ENCODE measurements at regions of chr3 and their contacts with region 1.

Region 1: GRCh38 chr3:101724329-101725193 is at the start of gene CEP97:
- DNase-seq: peak; percentile 94
- H3K4me3 Mint-ChIP-seq: peak within 1 kb of the TSS; percentile 97
- H3K27ac Mint-ChIP-seq: peak within 1 kb of the TSS; percentile 97
- H3K4me1 Mint-ChIP-seq: peaks cover 33% of the 10 kb centered on the region
- H3K27me3 Mint-ChIP-seq: no peaks in the 10 kb centered on the region
- total RNA-seq, gene CEP97: 17.0 to 20.3 TPM

Region 2: GRCh38 chr3:100708967-100709841 is 1015.4 kb before region 1 on chr3 and contains the start of gene TFG:
- CTCF ChIA-PET with region 1: no interaction called
- intact Hi-C with region 1: loop called (anchors 1 kb)
- DNase-seq: peak; percentile 98
- H3K4me3 Mint-ChIP-seq: peak within 1 kb of the TSS; percentile 83
- H3K27ac Mint-ChIP-seq: peak within 1 kb of the TSS; percentile 97
- H3K4me1 Mint-ChIP-seq: peaks cover 39% of the 10 kb centered on the region
- H3K27me3 Mint-ChIP-seq: peaks cover 6% of the 10 kb centered on the region
- total RNA-seq, gene TFG: 45.6 to 46.0 TPM

Region 3: GRCh38 chr3:100913870-100914648 is 810.5 kb before region 1 on chr3:
- CTCF ChIA-PET with region 1: no interaction called
- intact Hi-C with region 1: no loop called
- DNase-seq: no peak
- H3K4me3 Mint-ChIP-seq: no peak overlapping the region
- H3K27ac Mint-ChIP-seq: no peak overlapping the region
- H3K4me1 Mint-ChIP-seq: no peaks in the 10 kb centered on the region
- H3K27me3 Mint-ChIP-seq: peaks cover 11% of the 10 kb centered on the region

Region 4: GRCh38 chr3:101643861-101644613 is 80.5 kb before region 1 on chr3:
- CTCF ChIA-PET with region 1: no interaction called
- intact Hi-C with region 1: loop called (anchors 1 kb)
- DNase-seq: peak; percentile 69
- H3K4me3 Mint-ChIP-seq: no peak overlapping the region
- H3K27ac Mint-ChIP-seq: peak overlapping the region; percentile 83
- H3K4me1 Mint-ChIP-seq: peaks cover 24% of the 10 kb centered on the region
- H3K27me3 Mint-ChIP-seq: no peaks in the 10 kb centered on the region

Region 5: DNA sequence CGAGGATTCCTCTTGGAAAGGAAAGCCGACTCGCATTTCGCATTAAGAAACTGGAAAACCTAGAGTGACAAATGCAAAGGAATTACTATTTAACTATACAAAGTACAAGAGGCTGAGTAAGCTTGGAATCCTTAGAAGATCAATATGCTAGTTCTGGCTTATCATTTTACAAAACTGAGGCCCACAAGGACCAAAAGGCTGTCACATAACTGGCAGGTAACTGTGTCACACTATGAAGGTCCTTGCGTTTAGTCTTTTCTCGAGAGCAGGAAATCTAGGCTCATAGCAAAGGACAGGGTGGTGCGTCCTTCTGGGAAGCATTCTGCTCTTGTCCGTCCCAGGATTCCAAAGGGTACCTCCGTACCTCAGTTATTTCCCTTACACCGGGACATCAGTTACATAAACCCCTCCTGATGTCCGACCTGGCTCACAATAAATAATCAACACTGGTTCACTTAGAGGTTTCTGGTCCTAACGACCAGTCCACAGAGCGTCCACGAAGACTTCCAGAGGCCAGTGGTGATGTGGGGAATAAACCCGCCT is 38.6 kb before region 1 on chr3:
- CTCF ChIA-PET with region 1: interaction called, 7 read pairs
- intact Hi-C with region 1: loop called (anchors 1 kb)
- DNase-seq: no peak
- H3K4me3 Mint-ChIP-seq: peak overlapping the region; percentile 98
- H3K27ac Mint-ChIP-seq: peak overlapping the region; percentile 99
- H3K4me1 Mint-ChIP-seq: peaks cover 54% of the 10 kb centered on the region
- H3K27me3 Mint-ChIP-seq: no peaks in the 10 kb centered on the region

Region 6: DNA sequence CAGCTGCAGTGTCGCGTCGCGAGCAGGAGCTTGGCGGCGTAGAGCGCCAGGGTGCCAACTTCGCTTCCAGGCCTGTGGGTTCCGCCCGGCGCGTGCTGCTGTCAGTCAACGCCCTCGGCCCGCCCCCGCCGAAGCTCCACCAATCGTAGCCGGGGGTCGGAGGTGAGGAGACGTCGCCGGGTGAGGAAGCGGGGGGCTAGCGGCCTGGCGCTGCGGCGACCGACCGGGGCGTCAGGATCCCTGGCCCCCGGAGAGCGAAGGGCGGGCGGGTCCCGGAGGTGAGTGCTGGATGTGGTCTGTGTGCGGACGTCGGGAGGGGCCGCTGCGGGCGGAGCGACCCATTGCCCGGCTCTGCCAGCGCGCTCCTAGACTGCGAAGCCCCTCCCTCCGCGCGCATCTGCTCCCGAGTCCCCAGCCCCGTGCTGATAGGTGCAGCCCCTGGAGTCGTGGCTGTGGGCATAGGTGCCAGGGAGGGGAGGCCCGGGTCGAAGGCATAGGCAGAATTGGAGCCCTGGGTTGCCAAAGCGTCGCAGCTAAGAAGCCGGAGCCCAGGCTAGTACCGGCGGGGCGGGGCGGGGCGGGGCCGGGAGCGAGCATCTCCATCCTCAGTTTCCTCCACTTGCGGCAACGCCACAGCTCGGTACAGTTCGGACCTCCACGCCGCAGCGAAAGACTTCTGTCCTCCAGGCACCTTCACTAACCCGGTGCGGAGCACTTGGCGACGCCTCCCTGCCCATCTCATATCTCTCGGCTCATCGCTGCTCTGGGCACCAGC is 54.7 kb after region 1 on chr3 and contains the start of gene NXPE3:
- CTCF ChIA-PET with region 1: no interaction called
- intact Hi-C with region 1: loop called (anchors 1 kb)
- DNase-seq: peak; percentile 96
- H3K4me3 Mint-ChIP-seq: peak within 1 kb of the TSS; percentile 95
- H3K27ac Mint-ChIP-seq: peak within 1 kb of the TSS; percentile 96
- H3K4me1 Mint-ChIP-seq: peaks cover 49% of the 10 kb centered on the region
- H3K27me3 Mint-ChIP-seq: no peaks in the 10 kb centered on the region
- total RNA-seq, gene NXPE3: 18.9 to 19.3 TPM

Region 7: GRCh38 chr3:102224128-102224527 is 499.6 kb after region 1 on chr3:
- CTCF ChIA-PET with region 1: interaction called, 3 read pairs
- intact Hi-C with region 1: loop called (anchors 1 kb)
- DNase-seq: peak; percentile 50
- H3K4me3 Mint-ChIP-seq: no peak overlapping the region
- H3K27ac Mint-ChIP-seq: no peak overlapping the region
- H3K4me1 Mint-ChIP-seq: peaks cover 35% of the 10 kb centered on the region
- H3K27me3 Mint-ChIP-seq: no peaks in the 10 kb centered on the region

Region 8: DNA sequence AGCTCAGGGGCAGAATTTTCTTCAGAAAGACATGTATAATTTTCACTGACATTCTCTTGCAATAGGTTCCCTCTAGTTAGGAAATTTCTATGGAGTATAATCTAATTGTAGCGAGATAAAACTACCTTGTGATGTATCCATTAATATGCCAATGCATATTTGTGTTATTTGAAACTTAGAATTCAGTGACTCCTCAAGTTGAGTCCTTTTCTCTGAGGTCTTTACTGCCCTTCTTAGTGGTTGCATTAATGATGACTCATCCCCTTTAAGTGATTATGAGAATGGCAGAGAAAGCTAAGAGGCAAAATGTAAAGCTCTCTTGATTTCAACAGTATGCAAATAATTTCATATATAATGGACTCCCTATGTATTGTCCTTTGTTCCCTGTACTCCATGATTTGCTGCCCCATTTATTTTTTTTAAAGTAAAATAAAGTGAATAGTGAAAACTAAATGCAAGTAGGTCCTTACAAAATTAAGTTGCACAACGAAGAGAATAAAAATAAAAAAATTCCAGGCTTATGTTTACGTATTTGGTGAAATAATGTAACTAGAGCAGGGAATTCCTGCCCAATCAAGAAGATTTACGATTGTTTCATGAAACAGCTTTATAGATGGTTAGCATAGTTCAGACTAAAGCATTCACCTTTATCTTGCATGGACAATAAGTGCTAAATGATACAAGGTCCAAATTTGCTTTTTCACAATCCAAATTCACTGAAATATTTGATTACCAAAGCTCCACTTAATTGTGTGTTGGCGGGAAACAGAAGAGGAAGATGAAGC is 788.4 kb after region 1 on chr3:
- CTCF ChIA-PET with region 1: no interaction called
- intact Hi-C with region 1: no loop called
- DNase-seq: no peak
- H3K4me3 Mint-ChIP-seq: no peak overlapping the region
- H3K27ac Mint-ChIP-seq: no peak overlapping the region
- H3K4me1 Mint-ChIP-seq: no peaks in the 10 kb centered on the region
- H3K27me3 Mint-ChIP-seq: peaks cover 3% of the 10 kb centered on the region

Measured in activated naive CD4-positive, alpha-beta T cell treated with anti-CD3 and anti-CD28 coated beads for 36 hours (primary cell).